Activated T-helper 1 cell treated with anti-CD3 and anti-CD28 coated beads, Interleukin-12 subunit alpha, Interleukin-12 subunit beta, Interleukin-2, Interleukin-4 antibody, amounts not matched to agents 30 ng/mL and 10 ng/mL and 1 ng/mL, durations not matched to agents 14 hours and 24 hours and 36 hours (primary cell): ENCODE measurements at regions of chr22 and their contacts with region 1.

Region 1: GRCh38 chr22:17213976-17214375 is 5.3 kb downstream of the ADA2 start:
- DNase-seq: peak; percentile 31
- H3K4me3 Mint-ChIP-seq: no peak overlapping the region
- H3K27ac Mint-ChIP-seq: no peak overlapping the region
- H3K4me1 Mint-ChIP-seq: peaks cover 50% of the 10 kb centered on the region
- H3K27me3 Mint-ChIP-seq: no peaks in the 10 kb centered on the region

Region 2: GRCh38 chr22:17074648-17075002 is 139.4 kb before region 1 on chr22:
- intact Hi-C with region 1: loop called (anchors 1 kb)
- DNase-seq: no peak
- H3K4me3 Mint-ChIP-seq: no peak overlapping the region
- H3K27ac Mint-ChIP-seq: no peak overlapping the region
- H3K4me1 Mint-ChIP-seq: peaks cover 21% of the 10 kb centered on the region
- H3K27me3 Mint-ChIP-seq: peaks cover 36% of the 10 kb centered on the region

Region 3: DNA sequence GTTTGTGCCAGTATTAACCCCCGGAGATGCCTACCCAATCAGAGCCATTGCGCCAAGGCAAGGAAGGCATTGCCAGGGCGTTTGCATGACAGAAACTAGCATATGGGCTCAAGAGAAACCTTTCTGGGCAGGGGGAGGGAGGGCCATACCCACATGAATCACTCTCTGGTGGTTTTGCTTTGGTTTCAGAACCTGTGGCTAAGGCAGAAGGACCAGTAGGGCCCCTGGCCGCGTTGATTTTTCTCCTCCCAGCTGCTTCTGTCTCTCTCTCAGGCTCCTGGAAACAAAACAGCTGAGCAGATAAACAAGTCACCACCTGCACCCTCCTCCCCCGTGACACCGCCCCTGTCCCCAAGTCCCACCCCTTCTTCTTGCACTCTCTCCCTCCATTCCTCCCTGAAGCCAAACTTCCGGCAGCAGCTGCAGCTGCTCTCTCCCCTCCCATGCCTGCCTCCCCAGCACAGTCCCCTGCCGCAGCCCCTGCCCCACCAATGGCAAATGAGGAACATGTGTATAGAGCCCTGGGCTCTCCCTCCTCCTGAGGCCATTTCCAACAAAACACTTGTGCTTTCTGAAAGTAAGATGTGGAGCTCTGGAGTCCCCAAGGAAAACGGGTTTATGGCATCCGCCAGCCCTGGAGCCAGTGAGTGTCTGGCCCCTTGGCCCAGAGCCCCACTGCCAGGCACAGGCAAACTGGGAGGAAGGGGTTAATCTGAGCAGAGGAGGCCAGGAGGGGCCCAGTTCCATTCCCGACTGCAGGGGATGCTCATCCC is 44.2 kb after region 1 on chr22:
- intact Hi-C with region 1: loop called (anchors 1 kb)
- DNase-seq: peak; percentile 68
- H3K4me3 Mint-ChIP-seq: peak overlapping the region; percentile 40
- H3K27ac Mint-ChIP-seq: peak overlapping the region; percentile 63
- H3K4me1 Mint-ChIP-seq: peaks cover 35% of the 10 kb centered on the region
- H3K27me3 Mint-ChIP-seq: peaks cover 16% of the 10 kb centered on the region

Region 4: DNA sequence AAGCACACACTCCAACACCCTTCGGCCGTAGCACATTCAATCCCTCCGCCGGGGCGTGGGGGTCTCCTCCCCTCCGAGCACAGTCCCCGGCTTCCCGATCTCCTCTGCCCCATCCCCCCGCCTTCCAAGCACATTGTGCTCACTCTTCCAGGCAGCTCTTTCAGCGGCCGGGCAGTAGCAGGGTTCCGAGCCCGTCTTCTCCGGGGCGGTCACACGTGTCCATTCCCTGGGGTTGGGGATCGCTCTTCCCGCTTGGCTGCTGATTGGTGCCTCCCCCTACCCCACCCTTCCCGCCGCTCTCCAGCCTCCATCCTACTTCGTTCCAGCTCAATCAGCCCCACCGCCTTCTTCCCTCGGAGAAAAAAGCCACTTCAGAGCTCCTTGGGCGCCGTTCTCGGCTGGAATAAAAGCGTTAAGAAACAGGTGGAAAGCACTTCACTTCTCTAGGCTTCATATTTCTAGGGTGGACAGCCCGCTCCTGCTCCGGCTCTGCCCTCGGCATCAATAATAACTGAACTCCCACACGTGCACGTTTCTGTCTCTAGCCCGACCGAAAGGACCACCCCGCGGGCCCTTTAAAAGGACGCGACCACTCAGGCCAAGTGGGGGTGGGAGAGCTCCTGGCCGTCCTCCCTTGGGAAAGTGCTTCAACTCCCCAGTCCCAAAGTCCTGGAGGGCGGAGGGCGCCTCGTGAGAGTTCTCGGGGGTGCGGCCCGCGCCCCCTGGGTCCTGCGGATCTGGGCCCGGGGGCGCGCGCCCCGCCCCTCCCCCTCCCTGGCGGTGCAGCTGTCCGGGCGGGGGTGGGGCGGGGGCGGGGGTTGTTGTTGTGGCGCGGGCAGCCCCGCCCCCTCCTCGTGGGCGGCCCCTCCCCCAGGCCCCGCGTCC is 154.8 kb after region 1 on chr22:
- intact Hi-C with region 1: loop called (anchors 5 kb)
- DNase-seq: no peak
- H3K4me3 Mint-ChIP-seq: peak overlapping the region; percentile 80
- H3K27ac Mint-ChIP-seq: peak overlapping the region; percentile 44
- H3K4me1 Mint-ChIP-seq: peaks cover 29% of the 10 kb centered on the region
- H3K27me3 Mint-ChIP-seq: peaks cover 61% of the 10 kb centered on the region

Region 5: DNA sequence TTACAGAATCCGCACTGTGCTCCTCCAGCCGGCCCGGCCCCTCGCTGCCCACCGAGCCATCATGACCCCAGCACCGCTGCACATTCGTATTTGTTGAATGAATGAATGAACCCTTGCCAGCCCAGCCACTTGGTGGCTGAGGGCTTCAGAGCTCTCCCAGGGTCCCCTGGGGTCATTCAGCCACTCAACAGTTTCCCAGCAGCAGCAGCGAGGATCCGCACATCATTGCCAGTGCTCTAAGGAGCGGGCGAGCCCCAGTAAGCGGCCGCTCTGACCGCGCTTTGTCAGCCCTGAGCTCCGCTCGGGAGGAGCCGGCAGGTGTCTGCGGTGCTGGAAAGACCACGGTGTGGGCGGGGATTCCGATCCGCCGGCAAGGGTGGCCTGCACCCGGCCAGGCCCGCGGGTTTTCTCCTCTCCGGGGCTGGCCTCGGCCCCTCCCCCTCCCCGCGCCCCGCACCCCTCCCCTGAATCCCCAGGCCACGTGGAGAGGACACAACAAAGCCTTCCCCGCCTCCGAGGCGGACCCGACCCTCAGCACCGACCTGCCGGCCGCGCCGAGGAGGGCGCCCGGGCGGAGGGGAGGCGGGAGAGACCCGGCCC is 559.7 kb after region 1 on chr22:
- intact Hi-C with region 1: loop called (anchors 5 kb)
- DNase-seq: peak; percentile 67
- H3K4me3 Mint-ChIP-seq: peak overlapping the region; percentile 79
- H3K27ac Mint-ChIP-seq: peak overlapping the region; percentile 65
- H3K4me1 Mint-ChIP-seq: peaks cover 63% of the 10 kb centered on the region
- H3K27me3 Mint-ChIP-seq: peaks cover 14% of the 10 kb centered on the region